HepG2 (cell line): ENCODE measurements at regions of chr12 and their contacts with region 1.

Region 1: DNA sequence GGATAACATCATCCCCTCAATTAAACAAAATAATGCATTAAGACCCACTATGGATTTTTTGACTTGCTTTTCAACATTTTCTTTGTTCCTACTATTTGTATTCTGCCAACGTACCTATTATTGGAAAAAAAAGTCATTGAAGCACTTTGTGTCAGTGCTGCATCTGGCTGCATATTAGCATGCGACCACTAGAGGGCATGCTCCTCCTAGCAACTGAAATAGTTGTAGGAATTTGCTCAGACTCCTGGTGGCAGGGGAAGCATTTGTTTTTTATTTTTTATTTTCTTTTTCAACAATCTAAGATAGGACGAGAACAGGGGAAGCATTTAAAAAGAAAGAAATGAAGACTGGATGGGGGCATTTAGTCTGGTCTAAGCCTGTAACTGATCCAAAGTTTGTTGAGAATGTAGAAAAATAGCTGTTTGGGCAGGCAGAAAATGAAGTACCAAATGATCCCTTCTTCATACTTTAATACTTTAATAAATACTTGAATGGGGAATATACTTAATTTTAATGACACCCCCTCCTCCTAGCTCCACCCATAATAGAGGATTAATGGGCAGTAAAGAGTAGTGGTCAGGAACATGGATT is 14.5 kb upstream of the CLEC4A start:
- DNase-seq: peak; percentile 62
- ATAC-seq: peak; percentile 70
- H3K4me3 ChIP-seq: no peak overlapping the region
- H3K27ac ChIP-seq: no peak overlapping the region
- H3K4me1 ChIP-seq: no peaks in the 10 kb centered on the region
- H3K27me3 ChIP-seq: no peaks in the 10 kb centered on the region
- CTCF ChIP-seq: peak; percentile 84
- EP300 ChIP-seq: no peak
- POLR2A ChIP-seq: no peak
- RAD21 ChIP-seq: peak; percentile 67

Region 2: DNA sequence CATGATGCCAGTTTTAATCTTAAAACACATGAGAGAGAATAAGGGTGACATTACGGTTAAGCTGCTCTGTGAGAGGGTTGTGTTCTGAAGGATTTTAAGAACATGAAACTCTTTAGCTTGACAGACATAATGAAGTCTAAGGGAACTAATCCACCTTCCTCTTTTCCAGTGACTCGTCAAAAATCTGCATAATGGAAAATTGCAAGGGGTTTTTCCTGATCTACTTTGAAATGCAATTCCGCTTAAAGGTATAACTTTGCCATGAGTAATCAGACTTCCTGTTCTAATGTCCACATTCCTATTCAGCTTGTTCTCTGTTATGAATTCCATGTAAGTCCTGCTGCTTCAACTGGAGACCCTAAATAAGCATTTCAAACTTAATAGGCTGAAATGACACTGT is 47.9 kb after region 1 on chr12 and contains the start of gene ZNF705A:
- CTCF ChIA-PET with region 1: no interaction called
- POLR2A ChIA-PET with region 1: no interaction called
- in situ Hi-C with region 1: no loop called
- intact Hi-C with region 1: no loop called
- DNase-seq: peak; percentile 29
- ATAC-seq: no peak
- H3K4me3 ChIP-seq: no peak within 1 kb of the TSS
- H3K27ac ChIP-seq: no peak within 1 kb of the TSS
- H3K4me1 ChIP-seq: no peaks in the 10 kb centered on the region
- H3K27me3 ChIP-seq: no peaks in the 10 kb centered on the region; a peak in 1 of 5 replicates
- CTCF ChIP-seq: no peak
- EP300 ChIP-seq: no peak
- POLR2A ChIP-seq: no peak
- RAD21 ChIP-seq: no peak
- total RNA-seq, gene ZNF705A: not detected in 2 replicates

Region 3: DNA sequence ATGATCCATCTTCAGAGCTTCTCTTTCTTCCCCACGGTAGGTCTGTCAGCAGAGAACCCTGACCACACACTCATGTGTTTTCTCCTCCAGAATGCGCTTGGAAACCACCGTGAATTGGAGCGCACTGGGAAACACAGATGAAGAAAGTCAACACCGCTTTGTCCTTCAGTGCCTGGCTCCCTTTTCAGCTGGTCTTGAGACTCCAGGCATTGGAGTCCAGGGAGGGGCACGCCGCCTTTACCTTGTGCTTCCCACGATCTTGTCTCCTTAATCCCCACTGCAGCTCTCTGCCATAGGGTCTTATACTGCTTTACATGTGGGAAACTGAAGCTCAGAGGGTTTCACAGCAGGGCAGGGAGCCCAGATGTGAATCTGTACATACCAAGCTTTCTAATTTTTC is 117.5 kb after region 1 on chr12:
- CTCF ChIA-PET with region 1: interaction called, 18 read pairs
- POLR2A ChIA-PET with region 1: no interaction called
- in situ Hi-C with region 1: loop called (anchors 25 kb)
- intact Hi-C with region 1: no loop called
- DNase-seq: no peak
- ATAC-seq: no peak
- H3K4me3 ChIP-seq: no peak overlapping the region
- H3K27ac ChIP-seq: no peak overlapping the region
- H3K4me1 ChIP-seq: 0 out of 2 replicates have a peak, but pooled peaks cover 4% of the 10 kb centered on the region
- H3K27me3 ChIP-seq: peaks cover 1 to 14% of the 10 kb centered on the region in 2 experiments; a peak in 2 of 5 replicates
- CTCF ChIP-seq: no peak
- EP300 ChIP-seq: no peak
- POLR2A ChIP-seq: no peak
- RAD21 ChIP-seq: no peak